Heart left ventricle (tissue), 16 donors: ENCODE measurements at regions of chr10 and their contacts with region 1.

Region 1: GRCh38 chr10:51063659-51064535 is 10.4 kb upstream of the PRKG1 start:
- DNase-seq: no peak
- ATAC-seq: peak in 2 of 4 donors; percentile 51 to 53
- H3K4me3 ChIP-seq: no peak overlapping the region
- H3K27ac ChIP-seq: no peak overlapping the region
- H3K4me1 ChIP-seq: peaks cover 0 to 16% (median 2%) of the 10 kb centered on the region in 12 donors
- H3K27me3 ChIP-seq: no peaks in the 10 kb centered on the region
- CTCF ChIP-seq: peak; percentile 27 to 75 (median 60)
- POLR2A ChIP-seq: no peak

Region 2: DNA sequence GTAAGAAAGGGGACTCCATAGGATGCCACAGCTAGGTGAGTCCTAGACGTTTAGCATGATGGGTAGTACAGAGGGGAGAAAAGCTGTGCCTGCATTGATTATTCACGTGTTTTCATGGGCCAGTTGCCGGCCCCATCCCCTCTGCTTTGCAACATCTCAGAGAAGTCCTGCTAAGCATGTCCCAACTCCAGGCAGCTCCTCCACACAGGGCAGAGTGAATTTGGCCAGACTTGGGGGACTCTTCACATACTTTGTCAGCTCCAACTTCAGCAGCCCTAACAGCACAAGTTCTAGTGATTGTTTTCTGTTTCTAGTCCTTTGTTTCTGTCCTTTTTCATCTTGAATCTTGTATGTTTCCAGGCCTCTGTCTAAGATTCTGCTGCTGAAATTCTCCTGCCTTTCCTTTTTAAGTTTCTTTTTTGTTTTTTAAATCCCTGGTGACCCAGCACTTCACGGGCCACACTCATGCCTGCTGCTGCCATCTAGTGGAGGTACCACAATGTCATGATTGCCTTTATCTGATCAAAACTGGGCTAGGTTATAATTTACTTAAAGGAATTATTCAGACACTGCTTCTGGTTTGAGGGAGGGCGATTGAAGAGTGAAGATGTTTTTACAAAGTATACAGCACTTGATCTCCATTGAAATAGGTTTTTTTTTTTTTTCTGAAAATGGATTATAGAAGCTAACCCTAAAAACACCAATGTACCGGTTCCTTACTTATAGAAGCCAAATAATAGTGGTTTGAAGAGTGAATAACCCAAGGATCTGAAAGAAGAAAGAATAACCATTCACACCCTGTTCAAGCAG is 358.6 kb after region 1 on chr10:
- intact Hi-C with region 1: loop called in 4 of 10 experiments (anchors 5 to 10 kb)
- DNase-seq: peak; percentile 52 to 61 (median 57)
- ATAC-seq: peak; percentile 47 to 72 (median 60)
- H3K4me3 ChIP-seq: no peak overlapping the region
- H3K27ac ChIP-seq: peak overlapping the region; percentile 52 to 80 (median 72)
- H3K4me1 ChIP-seq: peaks cover 0 to 48% (median 10%) of the 10 kb centered on the region in 12 donors
- H3K27me3 ChIP-seq: no peaks in the 10 kb centered on the region
- CTCF ChIP-seq: peak; percentile 39 to 84 (median 70)
- POLR2A ChIP-seq: no peak